PC-9 (cell line): ENCODE measurements at regions of chr17 and their contacts with region 1.

Region 1: GRCh38 chr17:75784473-75785015 is at the start of gene UNK:
- DNase-seq: peak; percentile 96
- H3K4me3 ChIP-seq: peak within 1 kb of the TSS; percentile 72
- H3K27ac ChIP-seq: peak within 1 kb of the TSS; percentile 94
- H3K4me1 ChIP-seq: peaks cover 52% of the 10 kb centered on the region
- H3K27me3 ChIP-seq: no peaks in the 10 kb centered on the region
- CTCF ChIP-seq: no peak
- total RNA-seq, gene UNK: 25.3 and 27.8 TPM in 2 replicates

Region 2: DNA sequence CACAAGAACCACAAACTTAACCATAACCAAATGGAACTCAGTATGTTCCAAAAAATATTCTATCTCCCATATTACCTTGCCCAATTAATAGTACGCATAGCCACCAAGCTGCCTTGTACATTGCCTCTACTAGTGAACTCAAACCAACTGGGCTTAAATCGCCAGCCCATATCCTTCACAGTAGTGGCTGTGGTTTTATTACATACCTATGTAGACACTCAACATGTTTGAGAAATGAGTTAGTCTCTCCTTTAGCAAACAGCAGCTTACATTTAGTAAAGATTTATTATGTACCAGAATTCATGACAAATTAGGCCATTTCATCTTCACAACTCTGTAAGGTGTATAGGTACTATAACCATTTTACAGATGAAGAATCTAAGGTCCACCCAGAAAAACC is 420.5 kb before region 1 on chr17:
- CTCF ChIA-PET with region 1: no interaction called
- POLR2A ChIA-PET with region 1: no interaction called
- intact Hi-C with region 1: no loop called
- DNase-seq: peak in 1 of 2 experiments; percentile 61
- H3K4me3 ChIP-seq: no peak overlapping the region
- H3K27ac ChIP-seq: no peak overlapping the region
- H3K4me1 ChIP-seq: peaks cover 56% of the 10 kb centered on the region
- H3K27me3 ChIP-seq: no peaks in the 10 kb centered on the region
- CTCF ChIP-seq: no peak

Region 3: GRCh38 chr17:75877752-75878173 is 93.2 kb after region 1 on chr17:
- CTCF ChIA-PET with region 1: interaction called, 4 read pairs
- POLR2A ChIA-PET with region 1: interaction called, 13 read pairs
- intact Hi-C with region 1: loop called (anchors 1 kb)
- DNase-seq: peak; percentile 66 to 74
- H3K4me3 ChIP-seq: peak overlapping the region; percentile 96
- H3K27ac ChIP-seq: peak overlapping the region; percentile 87
- H3K4me1 ChIP-seq: peaks cover 35% of the 10 kb centered on the region
- H3K27me3 ChIP-seq: no peaks in the 10 kb centered on the region
- CTCF ChIP-seq: no peak

Region 4: DNA sequence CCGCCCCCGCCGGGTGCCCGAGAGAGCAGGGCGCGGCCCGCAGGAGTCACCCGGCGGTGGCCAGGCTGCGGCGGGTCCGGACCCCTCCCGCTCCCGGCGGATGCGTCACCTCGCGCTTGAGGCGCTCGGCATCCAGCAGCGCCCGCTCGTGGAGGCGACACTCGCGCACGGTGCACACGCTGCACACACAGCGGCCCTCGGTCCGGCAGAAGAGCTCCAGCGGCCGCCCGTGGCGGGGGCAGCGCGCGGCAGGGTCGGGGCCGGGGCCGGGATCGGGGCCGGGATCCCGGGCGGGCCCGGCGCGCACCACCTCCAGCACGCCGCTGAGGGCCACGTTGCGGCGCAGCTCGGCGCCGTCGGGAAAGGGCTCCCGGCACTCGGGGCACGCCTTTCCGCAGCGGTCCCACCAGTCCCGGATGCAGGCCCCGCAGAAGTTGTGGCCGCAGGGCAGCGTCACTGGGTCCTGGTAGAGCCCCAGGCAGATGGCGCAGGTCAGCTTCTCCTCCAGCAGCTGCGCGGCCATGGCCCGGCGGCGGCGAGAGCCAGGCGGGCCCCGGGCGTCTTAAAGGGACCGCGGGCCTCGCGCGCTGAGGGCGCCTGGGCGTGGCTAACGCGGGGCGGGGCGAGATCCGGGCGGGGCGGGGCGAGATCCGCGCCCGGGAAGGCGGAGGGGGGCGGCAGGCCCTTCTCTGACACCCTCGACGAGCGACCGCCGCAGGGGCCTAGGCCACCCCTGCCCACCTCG is 112.0 kb after region 1 on chr17 and contains the start of gene TRIM65:
- CTCF ChIA-PET with region 1: no interaction called
- POLR2A ChIA-PET with region 1: interaction called, 12 read pairs
- intact Hi-C with region 1: no loop called
- DNase-seq: peak; percentile 59 to 77
- H3K4me3 ChIP-seq: peak within 1 kb of the TSS; percentile 77
- H3K27ac ChIP-seq: peak within 1 kb of the TSS; percentile 33
- H3K4me1 ChIP-seq: 0 out of 2 replicates have a peak, but pooled peaks cover 4% of the 10 kb centered on the region
- H3K27me3 ChIP-seq: no peaks in the 10 kb centered on the region
- CTCF ChIP-seq: no peak
- total RNA-seq, gene TRIM65: 21.1 and 27.1 TPM in 2 replicates